Heart left ventricle (tissue), 16 donors: ENCODE measurements at regions of chr1 and their contacts with region 1.

Region 1: DNA sequence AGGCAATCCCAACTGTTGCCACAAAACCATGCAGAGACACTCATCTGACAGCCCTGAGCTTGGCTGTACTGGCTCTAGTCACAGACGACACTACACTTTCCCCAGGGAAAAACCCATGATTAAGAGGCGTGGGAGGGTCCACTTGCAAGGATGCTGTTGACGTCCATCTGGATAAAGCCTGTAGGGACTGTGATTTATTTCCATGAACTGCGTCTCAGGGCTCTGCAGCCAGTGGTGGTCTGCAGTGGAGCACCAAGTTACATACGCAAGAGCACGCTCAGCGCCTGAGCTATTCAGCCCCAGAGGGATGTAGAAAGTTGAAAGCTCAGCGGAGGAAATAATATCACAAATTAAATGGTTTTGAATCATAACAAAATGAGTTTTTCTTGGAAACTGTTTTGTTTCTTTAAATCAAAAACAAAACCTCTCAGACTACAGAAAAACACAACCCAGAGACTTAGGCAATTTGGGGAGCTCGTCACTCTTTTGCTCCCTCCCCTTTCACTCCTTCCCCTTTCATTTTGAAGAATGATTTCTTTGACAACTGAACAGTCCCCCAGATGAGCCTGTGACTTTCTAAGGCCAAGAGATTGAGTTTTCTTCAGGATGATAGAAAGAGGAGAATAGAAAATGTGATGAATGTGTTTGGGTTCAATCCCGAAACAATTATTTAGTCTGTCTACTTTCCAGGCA is 71.2 kb downstream of the NGF start:
- DNase-seq: peak in 4 of 5 donors; percentile 59 to 75 (median 67)
- ATAC-seq: peak; percentile 75 to 91 (median 84)
- H3K4me3 ChIP-seq: peak overlapping the region in 1 of 12 donors; percentile 6
- H3K27ac ChIP-seq: peak overlapping the region in 10 of 12 donors; percentile 29 to 75 (median 66)
- H3K4me1 ChIP-seq: peaks cover 0 to 12% (median 0%) of the 10 kb centered on the region in 12 donors
- H3K27me3 ChIP-seq: no peaks in the 10 kb centered on the region
- CTCF ChIP-seq: no peak
- POLR2A ChIP-seq: no peak

Region 2: DNA sequence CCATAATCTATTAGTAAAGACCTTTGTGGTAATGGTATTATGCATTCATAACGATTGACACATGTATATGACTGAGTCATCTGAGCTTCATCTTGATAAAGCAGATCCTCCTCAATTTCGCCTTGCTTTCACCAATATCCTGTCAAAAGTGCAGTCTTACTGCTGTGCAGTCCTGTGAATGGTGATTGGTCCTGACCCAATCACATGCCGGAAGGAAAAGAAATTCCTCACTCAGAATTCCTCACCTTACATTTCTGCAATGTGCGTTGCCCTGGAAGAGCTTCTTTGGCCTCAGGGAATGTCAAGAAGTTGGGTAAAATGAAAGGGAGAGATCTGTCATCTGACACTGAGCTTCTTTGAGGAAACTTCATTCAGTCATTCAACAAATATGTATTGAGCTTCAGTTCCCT is 56.6 kb before region 1 on chr1:
- intact Hi-C with region 1: loop called in 1 of 10 experiments (anchors 2 kb)
- DNase-seq: no peak
- ATAC-seq: no peak
- H3K4me3 ChIP-seq: no peak overlapping the region
- H3K27ac ChIP-seq: peak overlapping the region in 8 of 12 donors; percentile 11 to 57 (median 19)
- H3K4me1 ChIP-seq: peaks cover 0 to 11% (median 2%) of the 10 kb centered on the region in 12 donors
- H3K27me3 ChIP-seq: no peaks in the 10 kb centered on the region
- CTCF ChIP-seq: no peak
- POLR2A ChIP-seq: no peak

Region 3: DNA sequence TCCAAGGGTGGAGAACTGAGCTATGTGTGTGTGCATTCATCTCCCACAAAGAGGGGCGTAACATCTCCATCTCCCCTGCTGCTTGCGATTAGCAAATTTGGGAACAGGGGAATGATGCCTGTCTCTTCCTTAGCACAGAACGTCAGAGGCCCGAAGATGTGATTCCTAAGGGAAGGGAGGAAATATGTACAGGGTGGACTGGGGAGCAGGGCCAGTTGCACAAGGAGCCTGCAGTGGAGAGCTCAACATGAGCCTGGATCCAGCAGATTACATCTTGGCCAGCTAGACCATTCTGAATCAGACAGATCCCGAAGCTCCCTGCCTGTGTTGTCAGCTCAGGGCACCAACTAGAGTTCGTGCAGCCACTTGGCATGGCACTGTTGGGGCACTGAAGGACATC is 46.9 kb before region 1 on chr1:
- intact Hi-C with region 1: loop called in 1 of 10 experiments (anchors 5 kb)
- DNase-seq: peak in 4 of 5 donors; percentile 24 to 66 (median 33)
- ATAC-seq: peak; percentile 48 to 82 (median 73)
- H3K4me3 ChIP-seq: no peak overlapping the region
- H3K27ac ChIP-seq: peak overlapping the region in 9 of 12 donors; percentile 9 to 69 (median 51)
- H3K4me1 ChIP-seq: peaks cover 0 to 38% (median 9%) of the 10 kb centered on the region in 12 donors
- H3K27me3 ChIP-seq: no peaks in the 10 kb centered on the region
- CTCF ChIP-seq: no peak
- POLR2A ChIP-seq: no peak

Region 4: GRCh38 chr1:115437146-115437639 is 170.3 kb after region 1 on chr1:
- intact Hi-C with region 1: no loop called
- DNase-seq: no peak
- ATAC-seq: no peak
- H3K4me3 ChIP-seq: no peak overlapping the region
- H3K27ac ChIP-seq: no peak overlapping the region
- H3K4me1 ChIP-seq: peaks cover 0 to 23% (median 0%) of the 10 kb centered on the region in 12 donors
- H3K27me3 ChIP-seq: no peaks in the 10 kb centered on the region
- CTCF ChIP-seq: no peak
- POLR2A ChIP-seq: no peak

Region 5: GRCh38 chr1:116067566-116067890 is 800.7 kb after region 1 on chr1:
- intact Hi-C with region 1: no loop called
- DNase-seq: peak in 3 of 5 donors; percentile 24 to 60 (median 50)
- ATAC-seq: peak; percentile 79 to 95 (median 84)
- H3K4me3 ChIP-seq: no peak overlapping the region
- H3K27ac ChIP-seq: peak overlapping the region in 9 of 12 donors; percentile 14 to 71 (median 35)
- H3K4me1 ChIP-seq: peaks cover 0 to 4% (median 0%) of the 10 kb centered on the region in 12 donors
- H3K27me3 ChIP-seq: no peaks in the 10 kb centered on the region
- CTCF ChIP-seq: no peak
- POLR2A ChIP-seq: no peak